ENCODE measurements at regions of chr3 and their contacts with region 1.

Region 1: GRCh38 chr3:29280404-29281093 is at the start of gene RBMS3:
- DNase-seq: peak; percentile 84 to 93
- ATAC-seq: peak; percentile 93 to 96 (median 94)
- H3K4me3 ChIP-seq: peak within 1 kb of the TSS; percentile 54 to 79 (median 68)
- H3K27ac ChIP-seq: peak within 1 kb of the TSS; percentile 77 to 96 (median 92)
- H3K4me1 ChIP-seq: peaks cover 0 to 36% (median 18%) of the 10 kb centered on the region in 9 donors
- H3K27me3 ChIP-seq: no peaks in the 10 kb centered on the region
- CTCF ChIP-seq: peak; percentile 37 to 80 (median 52)
- total RNA-seq, gene RBMS3: 22.0 to 41.1 (median 28.6) TPM

Region 2: DNA sequence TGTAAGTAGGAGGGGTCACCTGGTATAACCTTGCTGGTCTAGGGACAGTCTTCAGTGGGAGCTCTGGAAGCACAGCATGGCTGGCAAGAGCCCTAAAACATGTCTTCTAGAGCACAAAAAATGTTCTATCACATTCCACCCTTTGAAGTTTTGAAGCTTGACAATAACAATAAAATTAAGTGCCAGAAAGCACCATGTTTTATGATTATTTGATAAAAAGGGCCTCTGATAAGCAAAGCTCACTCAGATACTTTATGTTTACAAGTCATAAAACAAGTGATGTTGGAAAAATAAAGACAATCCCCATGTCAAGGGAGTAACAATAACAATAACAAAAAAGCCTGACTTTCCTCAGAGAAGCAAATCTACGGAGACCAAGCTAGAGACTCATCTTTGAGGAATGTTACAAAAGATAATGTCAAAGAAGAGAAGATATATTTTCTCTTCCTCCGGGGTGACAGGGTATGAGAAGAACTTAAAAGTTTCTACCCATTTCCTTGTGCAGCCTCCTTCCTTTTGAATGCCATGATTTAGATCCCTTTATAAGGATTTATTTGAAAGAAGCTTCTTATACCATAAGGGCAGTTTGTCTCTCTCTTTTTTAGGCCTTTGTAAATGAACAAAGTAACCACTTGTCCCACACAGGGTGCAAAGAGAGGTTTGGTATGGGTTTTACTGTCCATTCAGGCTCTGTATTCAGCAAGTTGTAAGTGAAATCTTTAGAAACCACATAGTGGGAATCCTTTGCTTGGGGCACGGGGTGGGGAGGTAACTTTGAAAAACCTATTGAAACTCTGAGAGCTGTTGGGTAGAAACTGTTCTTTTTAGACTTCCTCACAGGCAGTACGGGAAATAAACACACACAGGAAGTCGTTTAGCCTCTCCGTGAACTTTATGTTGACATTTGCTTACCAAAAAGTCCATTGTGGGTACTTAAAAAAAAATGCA is 109.2 kb before region 1 on chr3:
- intact Hi-C with region 1: loop called in 2 of 10 experiments (anchors 2 to 10 kb)
- DNase-seq: no peak
- ATAC-seq: peak in 7 of 8 donors; percentile 41 to 90 (median 62)
- H3K4me3 ChIP-seq: no peak overlapping the region
- H3K27ac ChIP-seq: peak overlapping the region; percentile 7 to 85 (median 70)
- H3K4me1 ChIP-seq: peaks cover 0 to 37% (median 24%) of the 10 kb centered on the region in 9 donors
- H3K27me3 ChIP-seq: no peaks in the 10 kb centered on the region
- CTCF ChIP-seq: no peak

Region 3: DNA sequence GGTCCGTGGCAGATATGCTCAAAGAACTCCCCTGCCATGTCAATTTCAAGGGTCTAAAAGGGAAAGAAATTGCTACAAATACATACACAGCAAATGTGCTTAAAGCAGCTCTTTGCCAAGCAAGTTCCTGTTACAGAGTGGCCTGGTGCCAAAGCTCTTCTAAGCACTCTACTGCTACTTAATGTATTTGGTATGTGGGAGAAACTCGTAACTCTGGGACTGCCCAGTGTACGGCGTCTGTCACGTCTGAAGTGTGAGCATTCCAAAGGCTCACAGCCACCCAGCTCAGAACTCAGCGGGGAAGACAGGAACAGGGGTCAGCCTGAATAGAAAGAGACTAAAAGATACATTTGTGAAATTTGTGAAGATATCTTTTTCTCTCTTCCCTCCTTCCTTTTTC is 54.9 kb after region 1 on chr3:
- intact Hi-C with region 1: loop called in 7 of 10 experiments (anchors 1 to 10 kb)
- DNase-seq: peak; percentile 51 to 87
- ATAC-seq: peak; percentile 88 to 98 (median 94)
- H3K4me3 ChIP-seq: peak overlapping the region in 9 of 10 donors; percentile 10 to 46 (median 38)
- H3K27ac ChIP-seq: peak overlapping the region in 9 of 10 donors; percentile 2 to 92 (median 83)
- H3K4me1 ChIP-seq: peaks cover 10 to 97% (median 72%) of the 10 kb centered on the region in 9 donors
- H3K27me3 ChIP-seq: no peaks in the 10 kb centered on the region
- CTCF ChIP-seq: no peak

Region 4: DNA sequence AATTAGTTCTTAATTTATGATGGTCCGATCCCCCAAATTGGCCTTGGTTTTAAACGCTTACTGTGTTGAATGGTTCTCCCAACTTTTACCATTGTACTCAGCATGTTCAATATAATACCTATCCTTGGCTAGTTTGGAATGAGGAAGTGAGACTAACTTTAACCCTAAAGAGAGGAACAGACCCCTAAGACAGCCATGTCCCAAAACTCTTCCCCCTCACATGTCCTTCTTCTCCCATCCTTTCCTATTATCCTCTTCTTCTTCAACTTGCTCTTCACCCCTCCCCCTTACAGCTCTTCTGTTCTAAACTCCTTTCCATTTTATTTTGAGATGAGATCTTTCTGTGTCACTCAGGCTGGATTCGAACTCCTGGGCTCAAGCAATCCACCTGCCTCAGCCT is 116.9 kb after region 1 on chr3:
- intact Hi-C with region 1: no loop called
- DNase-seq: no peak
- ATAC-seq: no peak
- H3K4me3 ChIP-seq: no peak overlapping the region
- H3K27ac ChIP-seq: no peak overlapping the region
- H3K4me1 ChIP-seq: peaks cover 0 to 23% (median 8%) of the 10 kb centered on the region in 9 donors
- H3K27me3 ChIP-seq: no peaks in the 10 kb centered on the region
- CTCF ChIP-seq: no peak

Region 5: DNA sequence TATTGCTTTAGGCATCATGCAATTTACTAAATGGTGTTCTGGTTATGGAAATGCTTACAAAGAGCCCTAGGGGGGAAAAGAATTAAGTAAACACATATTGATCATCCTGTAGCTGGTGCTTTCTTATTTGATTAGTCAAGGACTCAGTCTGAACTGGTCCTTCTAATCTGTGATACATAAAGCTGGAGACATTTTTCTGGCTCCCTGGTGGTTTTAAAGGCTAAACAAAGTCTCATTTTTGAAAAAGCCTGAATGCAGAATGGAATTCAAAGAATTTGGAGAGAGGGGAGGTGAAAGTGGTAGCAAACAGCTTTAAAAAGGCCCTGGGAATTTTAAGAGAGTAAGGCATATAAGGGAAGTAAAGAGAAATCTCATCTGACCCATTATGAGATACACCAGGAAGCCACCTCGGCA is 150.0 kb after region 1 on chr3:
- intact Hi-C with region 1: no loop called
- DNase-seq: no peak
- ATAC-seq: peak in 1 of 8 donors; percentile 9
- H3K4me3 ChIP-seq: no peak overlapping the region
- H3K27ac ChIP-seq: peak overlapping the region in 2 of 10 donors; percentile 0 to 23
- H3K4me1 ChIP-seq: peaks cover 2 to 69% (median 33%) of the 10 kb centered on the region in 9 donors
- H3K27me3 ChIP-seq: no peaks in the 10 kb centered on the region
- CTCF ChIP-seq: no peak

Region 6: GRCh38 chr3:29515451-29515850 is 234.9 kb after region 1 on chr3:
- intact Hi-C with region 1: loop called in 3 of 10 experiments (anchors 5 to 10 kb)
- DNase-seq: no peak
- ATAC-seq: peak in 3 of 8 donors; percentile 25 to 56 (median 34)
- H3K4me3 ChIP-seq: no peak overlapping the region
- H3K27ac ChIP-seq: peak overlapping the region in 2 of 10 donors; percentile 3 to 75
- H3K4me1 ChIP-seq: peaks cover 12 to 66% (median 43%) of the 10 kb centered on the region in 9 donors
- H3K27me3 ChIP-seq: no peaks in the 10 kb centered on the region
- CTCF ChIP-seq: no peak

Region 7: GRCh38 chr3:29639578-29640290 is 359.2 kb after region 1 on chr3:
- intact Hi-C with region 1: loop called in 1 of 10 experiments (anchors 5 kb)
- DNase-seq: no peak
- ATAC-seq: peak in 1 of 8 donors; percentile 13
- H3K4me3 ChIP-seq: no peak overlapping the region
- H3K27ac ChIP-seq: peak overlapping the region in 4 of 10 donors; percentile 25 to 90 (median 38)
- H3K4me1 ChIP-seq: peaks cover 0 to 73% (median 56%) of the 10 kb centered on the region in 9 donors
- H3K27me3 ChIP-seq: no peaks in the 10 kb centered on the region
- CTCF ChIP-seq: no peak

Region 8: DNA sequence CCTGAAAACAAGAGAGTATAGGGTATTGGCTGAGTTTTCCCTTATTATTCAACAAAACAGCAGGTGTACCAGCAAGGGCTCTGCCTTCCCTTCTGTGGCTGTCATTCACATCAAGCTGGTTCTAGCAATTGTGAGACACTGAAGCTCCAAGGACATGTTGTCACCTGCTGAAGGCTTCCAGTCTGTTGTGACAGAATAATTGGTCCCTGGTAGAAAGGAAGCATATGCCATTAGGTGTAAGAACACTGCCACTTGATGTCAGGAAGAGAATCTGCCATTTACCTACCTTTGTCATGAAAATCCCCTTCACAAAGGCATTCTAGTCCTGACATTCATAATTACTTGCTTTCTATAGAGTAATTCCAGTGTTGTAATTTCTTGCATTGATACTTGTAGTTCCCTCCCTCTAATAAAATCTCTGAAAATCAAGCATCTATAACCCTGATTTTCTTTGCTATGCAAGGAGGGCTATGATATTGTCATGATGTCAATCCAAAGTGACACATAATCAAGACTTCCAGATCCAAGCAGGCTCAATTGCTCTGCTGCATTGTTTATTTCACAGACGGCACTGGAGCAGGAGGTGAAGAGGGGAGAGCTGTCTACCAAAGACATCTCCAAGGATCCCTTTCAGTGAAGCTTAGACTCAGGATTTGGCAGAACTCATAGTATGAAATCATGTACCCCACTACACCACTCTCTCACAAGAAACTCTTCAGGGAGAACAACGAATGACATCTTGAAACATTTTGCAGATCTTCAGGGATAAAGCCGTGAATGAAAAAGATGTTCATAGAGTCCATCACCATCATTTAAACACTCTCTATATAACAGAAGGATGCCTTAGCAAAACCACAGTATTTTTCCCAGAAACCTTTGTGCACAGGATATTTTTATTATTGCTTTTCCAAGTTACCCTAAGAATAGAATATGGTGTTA is 425.6 kb after region 1 on chr3:
- intact Hi-C with region 1: loop called in 1 of 10 experiments (anchors 5 kb)
- DNase-seq: no peak
- ATAC-seq: peak in 3 of 8 donors; percentile 24 to 49 (median 33)
- H3K4me3 ChIP-seq: no peak overlapping the region
- H3K27ac ChIP-seq: peak overlapping the region in 1 of 10 donors; percentile 5
- H3K4me1 ChIP-seq: peaks cover 4 to 47% (median 21%) of the 10 kb centered on the region in 9 donors
- H3K27me3 ChIP-seq: no peaks in the 10 kb centered on the region
- CTCF ChIP-seq: no peak

Region 9: DNA sequence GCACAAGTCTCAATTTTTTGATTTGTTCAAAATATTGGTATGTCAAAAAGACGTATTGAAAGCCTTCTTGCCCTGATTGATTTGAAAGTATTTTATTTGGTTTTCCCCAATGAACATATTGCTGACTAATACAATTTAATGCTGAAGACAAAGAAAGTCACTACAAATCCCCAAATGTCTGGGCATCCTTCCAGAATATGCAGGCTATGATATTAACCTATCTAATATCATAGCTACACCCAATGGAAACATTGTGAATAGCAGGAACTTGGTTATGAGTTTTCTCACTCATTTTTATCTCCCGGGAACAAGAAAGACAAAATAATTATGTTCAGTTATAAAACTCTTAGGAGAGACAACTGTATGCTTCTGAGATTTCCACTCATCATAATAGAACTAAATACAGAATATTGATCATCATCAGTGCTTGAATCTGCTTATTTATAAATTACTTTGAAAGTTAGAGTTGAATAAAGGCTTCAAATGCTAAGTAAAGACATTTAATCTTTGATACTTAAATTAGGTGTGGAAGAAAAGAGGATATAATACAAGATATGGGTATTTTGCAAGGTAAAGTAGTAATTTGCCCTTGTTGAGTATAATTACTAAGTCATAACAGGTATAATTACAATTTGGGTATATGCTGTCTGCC is 484.2 kb after region 1 on chr3:
- intact Hi-C with region 1: loop called in 8 of 10 experiments (anchors 1 to 10 kb)
- DNase-seq: peak in 1 of 2 donors; percentile 74
- ATAC-seq: peak in 7 of 8 donors; percentile 61 to 77 (median 73)
- H3K4me3 ChIP-seq: no peak overlapping the region
- H3K27ac ChIP-seq: peak overlapping the region in 1 of 10 donors; percentile 13
- H3K4me1 ChIP-seq: peaks cover 1 to 40% (median 32%) of the 10 kb centered on the region in 9 donors
- H3K27me3 ChIP-seq: no peaks in the 10 kb centered on the region
- CTCF ChIP-seq: peak; percentile 63 to 88 (median 67)